ENCODE measurements at regions of chr2 and their contacts with region 1.

Region 1: DNA sequence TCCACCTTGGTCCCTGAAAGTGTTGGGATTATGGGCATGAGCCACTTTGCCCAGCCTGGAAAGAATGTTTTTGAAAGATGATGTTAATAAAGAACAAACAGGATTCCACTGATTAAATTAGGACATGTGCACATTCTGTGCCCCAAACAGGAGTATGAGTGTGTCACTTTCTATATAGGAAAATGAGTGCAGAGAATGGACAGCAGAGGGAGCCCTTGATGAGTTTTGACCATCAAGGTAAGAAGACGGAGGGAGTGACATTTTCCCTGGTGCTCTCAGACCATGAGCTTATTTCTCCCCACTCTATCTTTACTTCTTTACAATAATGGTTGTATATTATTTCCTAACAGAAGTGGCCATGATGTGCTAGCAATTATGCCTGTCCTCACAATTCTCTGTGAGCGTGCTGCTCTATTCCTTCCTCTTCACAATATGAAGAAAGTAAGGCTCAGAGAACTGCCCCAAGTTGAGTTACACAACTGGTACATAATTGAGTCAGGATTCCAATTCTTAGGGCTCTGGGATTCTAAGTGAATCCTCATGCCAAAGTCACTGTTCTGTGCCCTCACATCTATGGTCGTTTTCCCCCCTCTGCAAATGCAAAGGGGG is 20.6 kb downstream of the RPL37A start:
- DNase-seq: peak; percentile 82
- H3K4me3 ChIP-seq: no peak overlapping the region
- CTCF ChIP-seq: peak; percentile 66

Region 2: GRCh38 chr2:216620786-216621185 is 101.5 kb after region 1 on chr2:
- in situ Hi-C with region 1: no loop called
- DNase-seq: no peak
- H3K4me3 ChIP-seq: no peak overlapping the region
- CTCF ChIP-seq: no peak

Region 3: DNA sequence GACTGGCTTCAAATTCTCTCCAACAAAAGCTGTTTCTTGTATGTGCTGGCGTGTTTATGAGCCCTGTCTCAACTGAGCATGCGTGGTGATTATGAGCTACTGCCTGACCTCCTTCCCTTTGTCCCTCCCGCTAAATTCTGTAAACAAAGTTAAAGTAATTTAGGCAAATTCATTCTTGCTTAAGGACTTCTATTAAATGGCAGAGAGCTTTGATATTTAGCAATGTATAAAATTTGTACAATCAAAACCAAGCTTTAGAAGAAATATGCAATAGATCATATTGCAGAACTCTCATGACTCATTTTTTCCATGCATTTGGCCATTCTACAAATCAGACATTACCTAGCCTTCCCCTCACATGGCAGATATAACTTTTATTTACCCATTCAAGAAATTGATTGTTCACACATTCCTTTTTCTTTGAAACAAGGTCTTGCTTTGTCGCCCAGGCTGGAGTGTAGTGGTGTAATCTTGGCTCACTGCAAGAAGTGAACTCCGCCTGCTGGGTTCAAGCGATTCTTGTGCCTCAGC is 132.2 kb after region 1 on chr2:
- in situ Hi-C with region 1: loop called (anchors 5 kb)
- DNase-seq: peak; percentile 84
- H3K4me3 ChIP-seq: no peak overlapping the region
- CTCF ChIP-seq: no peak

Region 4: DNA sequence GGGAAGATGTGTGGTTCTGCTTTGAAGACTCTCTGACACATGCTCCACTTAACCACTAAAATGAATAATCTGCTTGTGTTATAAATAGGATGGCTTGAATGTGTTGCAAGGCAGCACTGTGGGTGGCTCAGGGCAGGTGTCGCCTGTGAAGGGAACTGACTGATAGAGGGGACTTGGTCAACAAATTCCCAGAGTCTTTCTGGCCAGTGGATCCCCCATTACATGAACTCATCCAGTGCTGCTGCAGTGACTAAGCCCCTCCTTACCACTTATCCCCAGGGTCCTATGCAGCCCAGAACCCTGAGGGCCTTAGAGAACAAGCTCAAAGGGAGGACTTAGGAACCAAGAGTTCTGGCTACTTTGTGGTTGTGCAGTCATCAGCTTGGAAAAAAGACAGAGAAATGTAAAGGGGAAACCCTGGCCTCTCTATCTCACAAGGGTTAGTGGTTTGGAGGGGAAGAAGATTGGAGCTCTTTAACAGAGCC is 566.8 kb after region 1 on chr2:
- in situ Hi-C with region 1: loop called (anchors 10 kb)
- DNase-seq: no peak
- H3K4me3 ChIP-seq: no peak overlapping the region
- CTCF ChIP-seq: no peak

Region 5: DNA sequence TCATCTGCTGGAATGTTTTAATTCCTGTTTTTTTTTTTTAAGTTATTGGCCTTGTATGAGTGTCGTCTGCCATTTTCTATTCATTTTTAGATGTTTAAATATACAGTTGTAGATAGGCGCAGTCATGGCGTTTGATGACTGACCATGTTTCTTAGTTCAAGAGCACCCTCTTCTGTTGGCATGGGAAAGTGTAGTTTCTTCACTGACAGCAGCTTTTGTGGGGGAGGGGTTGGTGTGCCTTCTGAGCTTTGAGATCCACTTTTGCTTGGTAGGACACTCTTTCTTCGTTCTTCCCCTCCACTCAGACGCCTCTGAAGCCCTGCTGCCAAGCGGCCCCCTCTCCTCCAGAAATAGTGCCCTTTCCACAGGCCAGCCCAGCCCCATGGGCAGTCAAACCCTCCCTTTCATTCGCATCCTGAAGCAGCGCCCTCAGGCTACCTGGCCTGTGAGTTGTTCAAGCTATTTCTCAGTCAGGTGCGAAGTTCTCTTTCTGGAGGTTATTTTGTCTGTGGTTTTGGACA is 991.6 kb after region 1 on chr2:
- in situ Hi-C with region 1: loop called (anchors 25 kb)
- DNase-seq: peak; percentile 84
- H3K4me3 ChIP-seq: no peak overlapping the region
- CTCF ChIP-seq: peak; percentile 74